Activated naive CD4-positive, alpha-beta T cell treated with anti-CD3 and anti-CD28 coated beads for 36 hours (primary cell): ENCODE measurements at regions of chr17 and their contacts with region 1.

Region 1: GRCh38 chr17:48024937-48025906 is 12.4 kb downstream of the COPZ2 start:
- DNase-seq: peak; percentile 98
- H3K4me3 Mint-ChIP-seq: peak overlapping the region; percentile 81
- H3K27ac Mint-ChIP-seq: no peak overlapping the region
- H3K4me1 Mint-ChIP-seq: peaks cover 23% of the 10 kb centered on the region
- H3K27me3 Mint-ChIP-seq: peaks cover 19% of the 10 kb centered on the region

Region 2: DNA sequence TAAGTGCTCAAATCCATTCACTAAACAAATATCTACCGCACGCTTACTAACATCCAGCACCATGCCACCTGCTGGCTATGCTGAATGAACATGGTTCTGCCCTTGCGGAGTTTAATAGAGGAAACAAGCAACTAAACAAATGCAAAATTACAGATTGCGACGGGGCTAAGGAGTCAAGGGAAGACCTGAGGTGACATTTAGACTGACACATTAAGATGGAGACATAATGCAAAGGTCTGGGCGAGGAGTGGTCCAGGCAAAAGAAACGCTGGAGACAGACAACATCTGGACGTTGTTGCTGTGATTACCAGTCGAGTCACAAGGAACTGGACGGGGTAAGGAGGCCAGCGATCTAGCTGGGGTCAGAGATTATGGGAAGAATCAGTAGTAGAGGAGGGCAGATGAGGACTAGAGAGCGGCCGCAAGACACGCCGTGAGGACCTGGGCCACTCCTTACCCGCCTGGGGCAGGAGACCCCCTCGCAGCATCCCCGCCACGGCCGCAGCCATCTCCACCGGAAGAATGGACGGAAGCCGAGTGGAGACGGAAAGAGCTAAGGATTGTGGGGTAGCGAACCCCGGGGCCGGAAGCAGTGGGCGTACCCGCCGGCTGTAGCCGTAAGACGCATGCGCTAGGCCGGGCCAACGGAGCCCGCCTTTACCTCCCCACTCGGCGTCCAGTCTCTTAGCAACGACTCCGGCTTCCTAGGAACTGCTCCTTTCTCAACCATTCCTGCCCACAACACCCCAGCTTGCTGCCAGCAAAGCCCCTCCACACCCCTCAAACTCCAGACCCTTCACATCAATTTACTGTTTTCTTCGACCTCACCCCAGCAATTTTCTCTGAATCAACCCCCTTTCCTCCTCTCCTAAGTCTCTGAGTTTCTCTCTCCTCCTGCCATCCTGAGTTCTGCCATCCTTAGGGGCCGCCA is 194.0 kb before region 1 on chr17 and contains the starts of genes LRRC46 and MRPL10:
- CTCF ChIA-PET with region 1: no interaction called
- intact Hi-C with region 1: no loop called
- DNase-seq: peak; percentile 93
- H3K4me3 Mint-ChIP-seq: peak within 1 kb of the TSS; percentile 89
- H3K27ac Mint-ChIP-seq: peak within 1 kb of the TSS; percentile 78
- H3K4me1 Mint-ChIP-seq: peaks cover 60% of the 10 kb centered on the region
- H3K27me3 Mint-ChIP-seq: no peaks in the 10 kb centered on the region
- total RNA-seq, gene LRRC46: 0.31 to 0.52 TPM
- total RNA-seq, gene MRPL10: 66.7 to 70.0 TPM

Region 3: DNA sequence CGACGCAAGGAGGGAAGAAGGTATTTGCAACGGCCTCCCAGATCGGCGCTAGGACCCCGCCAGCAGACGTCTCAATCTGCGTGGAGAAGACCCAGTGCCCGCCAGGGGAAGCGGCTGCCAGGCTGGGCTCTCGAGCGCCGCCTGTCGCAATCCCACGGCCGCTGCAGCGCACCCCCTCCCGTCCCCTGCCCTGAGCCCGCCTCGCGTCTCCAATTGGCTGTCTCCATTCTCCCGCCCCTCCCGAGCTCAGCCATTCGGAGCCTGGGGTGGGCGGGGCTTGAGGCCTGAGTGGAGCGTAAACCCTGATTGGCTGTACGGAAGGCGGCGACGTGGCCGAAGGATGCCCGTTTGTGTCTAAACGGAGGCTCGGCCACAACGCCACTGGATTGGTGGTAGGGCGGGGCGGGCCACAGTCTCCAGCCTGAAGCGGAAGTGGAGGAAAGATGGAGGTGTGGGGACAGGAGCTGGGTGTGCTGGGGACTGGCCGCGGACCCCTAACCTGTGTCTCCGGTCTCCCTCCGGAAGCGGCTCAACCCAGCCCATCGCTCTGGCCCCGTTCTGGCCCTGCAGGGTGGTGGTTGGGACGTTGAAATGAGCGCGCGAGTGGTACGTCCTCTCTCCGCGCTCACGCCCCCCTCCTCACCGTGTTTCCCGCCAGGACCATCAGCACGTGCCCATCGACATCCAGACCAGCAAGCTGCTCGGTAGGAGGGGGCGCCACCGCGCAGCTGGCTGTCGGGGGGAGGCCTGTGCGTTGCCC is 54.3 kb before region 1 on chr17 and contains the start of gene CDK5RAP3:
- CTCF ChIA-PET with region 1: interaction called, 3 read pairs
- intact Hi-C with region 1: loop called (anchors 2 kb)
- DNase-seq: peak; percentile 100
- H3K4me3 Mint-ChIP-seq: peak within 1 kb of the TSS; percentile 95
- H3K27ac Mint-ChIP-seq: peak within 1 kb of the TSS; percentile 80
- H3K4me1 Mint-ChIP-seq: peaks cover 24% of the 10 kb centered on the region
- H3K27me3 Mint-ChIP-seq: no peaks in the 10 kb centered on the region
- total RNA-seq, gene CDK5RAP3: 174 to 175 TPM

Region 4: GRCh38 chr17:48002266-48002915 is 22.8 kb before region 1 on chr17:
- CTCF ChIA-PET with region 1: interaction called, 12 read pairs
- intact Hi-C with region 1: no loop called
- DNase-seq: no peak
- H3K4me3 Mint-ChIP-seq: no peak overlapping the region
- H3K27ac Mint-ChIP-seq: no peak overlapping the region
- H3K4me1 Mint-ChIP-seq: peaks cover 4% of the 10 kb centered on the region
- H3K27me3 Mint-ChIP-seq: peaks cover 7% of the 10 kb centered on the region

Region 5: DNA sequence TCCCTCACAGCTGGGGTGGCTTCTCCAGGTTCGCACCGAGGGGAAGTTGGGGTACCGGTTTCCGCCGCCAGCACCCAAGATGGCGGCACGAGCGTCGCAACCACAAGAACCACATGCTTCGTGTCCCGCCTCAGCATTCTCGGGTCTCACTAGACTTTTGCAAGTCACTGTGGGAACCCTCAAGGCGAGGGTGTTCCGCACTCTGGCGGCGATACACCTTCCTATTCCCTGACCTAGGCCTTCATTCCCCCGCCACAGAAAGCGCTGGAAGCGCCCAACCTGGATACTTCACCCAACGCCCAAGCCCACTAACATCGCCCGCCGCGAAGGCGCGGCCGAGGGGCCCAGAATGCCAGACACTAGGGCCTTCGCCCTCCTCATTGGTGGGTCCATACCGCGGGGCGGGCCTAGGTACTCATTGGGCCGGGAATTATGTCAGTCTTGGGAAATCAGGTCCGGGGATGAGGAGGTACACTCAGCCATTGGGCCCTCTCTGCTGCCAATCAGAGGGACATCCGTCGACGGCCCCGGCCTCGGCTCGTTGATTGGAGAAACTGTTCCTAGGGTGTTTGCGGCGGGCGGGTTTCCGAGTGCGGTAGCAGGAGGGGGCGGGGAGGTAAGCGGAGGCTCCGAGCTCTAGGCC is 22.6 kb after region 1 on chr17 and contains the start of gene NFE2L1:
- CTCF ChIA-PET with region 1: interaction called, 25 read pairs
- intact Hi-C with region 1: loop called (anchors 1 kb)
- DNase-seq: peak; percentile 100
- H3K4me3 Mint-ChIP-seq: peak within 1 kb of the TSS; percentile 99
- H3K27ac Mint-ChIP-seq: peak within 1 kb of the TSS; percentile 98
- H3K4me1 Mint-ChIP-seq: peaks cover 51% of the 10 kb centered on the region
- H3K27me3 Mint-ChIP-seq: no peaks in the 10 kb centered on the region
- total RNA-seq, gene NFE2L1: 95.2 to 102 TPM

Region 6: DNA sequence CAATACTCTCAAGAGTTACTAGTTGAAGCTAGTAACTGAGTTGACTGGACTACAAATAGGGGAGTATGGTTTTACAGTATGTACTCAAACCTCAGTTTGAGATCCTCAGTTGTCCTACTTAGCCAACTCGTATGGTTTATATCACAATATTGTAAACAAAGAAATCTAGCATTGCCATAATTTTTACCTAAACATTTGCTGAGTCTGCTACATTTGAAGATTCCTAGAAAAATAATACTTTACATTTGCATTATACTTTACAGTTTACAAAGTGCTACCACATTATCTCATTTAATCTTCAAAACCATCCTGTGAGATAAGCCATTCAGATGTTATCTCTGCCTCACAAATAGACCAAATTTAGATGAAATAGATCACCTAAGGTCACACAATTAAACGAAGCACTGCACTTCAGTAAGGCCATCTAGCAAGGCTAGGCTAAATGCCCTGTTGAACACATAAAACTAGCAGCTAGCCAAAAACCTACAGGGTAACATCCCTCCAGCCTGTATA is 59.8 kb after region 1 on chr17:
- CTCF ChIA-PET with region 1: interaction called, 29 read pairs
- intact Hi-C with region 1: no loop called
- DNase-seq: no peak
- H3K4me3 Mint-ChIP-seq: no peak overlapping the region
- H3K27ac Mint-ChIP-seq: no peak overlapping the region
- H3K4me1 Mint-ChIP-seq: peaks cover 4% of the 10 kb centered on the region
- H3K27me3 Mint-ChIP-seq: no peaks in the 10 kb centered on the region

Region 7: GRCh38 chr17:48131216-48131824 is 106.1 kb after region 1 on chr17:
- CTCF ChIA-PET with region 1: interaction called, 34 read pairs
- intact Hi-C with region 1: loop called (anchors 1 kb)
- DNase-seq: peak; percentile 75
- H3K4me3 Mint-ChIP-seq: no peak overlapping the region
- H3K27ac Mint-ChIP-seq: no peak overlapping the region
- H3K4me1 Mint-ChIP-seq: no peaks in the 10 kb centered on the region
- H3K27me3 Mint-ChIP-seq: no peaks in the 10 kb centered on the region

Region 8: DNA sequence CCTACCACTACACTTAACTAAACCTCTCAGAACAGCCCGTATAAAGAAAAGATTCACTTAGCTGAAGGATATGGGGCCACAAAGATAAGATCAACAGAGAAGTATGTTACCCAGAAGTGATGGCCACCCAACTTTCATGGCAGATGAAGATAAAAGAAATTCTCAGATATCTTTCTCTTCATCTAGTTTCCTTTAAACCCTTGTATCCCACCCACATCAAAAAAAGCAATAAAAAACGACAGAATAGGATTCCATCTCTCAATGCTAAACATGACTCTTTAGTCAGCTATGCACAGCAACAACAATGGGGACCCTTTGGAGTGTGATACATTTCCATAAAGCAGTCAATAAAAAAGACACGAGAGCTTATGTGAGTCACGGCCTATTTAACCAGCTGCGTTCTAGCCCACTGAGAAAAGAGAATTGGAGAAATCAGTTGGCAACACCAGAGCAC is 168.9 kb after region 1 on chr17:
- CTCF ChIA-PET with region 1: no interaction called
- intact Hi-C with region 1: no loop called
- DNase-seq: no peak
- H3K4me3 Mint-ChIP-seq: no peak overlapping the region
- H3K27ac Mint-ChIP-seq: no peak overlapping the region
- H3K4me1 Mint-ChIP-seq: peaks cover 39% of the 10 kb centered on the region
- H3K27me3 Mint-ChIP-seq: no peaks in the 10 kb centered on the region

Region 9: DNA sequence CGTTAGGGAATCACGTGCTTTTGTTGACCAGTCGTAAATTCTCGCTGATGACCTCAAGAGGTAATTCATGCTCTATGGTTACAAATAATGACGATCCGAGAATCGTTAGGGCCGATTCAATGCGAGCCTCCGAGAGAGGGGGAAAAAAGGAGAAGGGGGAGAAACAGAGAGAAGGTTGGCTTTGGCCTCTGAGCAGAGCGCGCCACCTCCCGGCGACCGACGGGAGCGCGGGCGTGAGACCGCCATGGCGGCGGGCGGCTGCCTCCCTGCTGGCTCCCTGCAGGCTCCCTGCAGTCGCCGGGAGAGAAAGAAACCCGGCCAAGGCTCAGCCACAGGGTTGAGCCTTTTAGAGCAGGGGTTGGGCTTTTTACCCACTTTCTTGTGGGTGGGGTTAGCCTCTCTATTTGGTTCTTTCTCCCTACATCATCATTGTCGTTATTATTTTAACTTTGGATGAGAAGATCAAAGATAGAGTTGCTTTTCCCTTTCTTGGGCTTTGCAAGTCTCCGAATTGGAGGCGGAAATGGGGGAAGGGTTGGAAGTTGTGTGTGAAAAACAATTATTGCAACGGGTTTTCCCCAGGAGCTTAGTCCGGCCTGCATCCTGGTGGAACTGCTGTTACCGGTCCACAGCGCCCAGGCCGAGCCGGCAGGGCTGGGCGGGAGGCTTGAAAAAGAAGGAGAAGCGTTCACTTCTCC is 568.8 kb after region 1 on chr17:
- CTCF ChIA-PET with region 1: interaction called, 7 read pairs
- intact Hi-C with region 1: loop called (anchors 2 kb)
- DNase-seq: peak; percentile 87
- H3K4me3 Mint-ChIP-seq: peak overlapping the region; percentile 77
- H3K27ac Mint-ChIP-seq: no peak overlapping the region
- H3K4me1 Mint-ChIP-seq: peaks cover 36% of the 10 kb centered on the region
- H3K27me3 Mint-ChIP-seq: peaks cover 90% of the 10 kb centered on the region

Region 10: DNA sequence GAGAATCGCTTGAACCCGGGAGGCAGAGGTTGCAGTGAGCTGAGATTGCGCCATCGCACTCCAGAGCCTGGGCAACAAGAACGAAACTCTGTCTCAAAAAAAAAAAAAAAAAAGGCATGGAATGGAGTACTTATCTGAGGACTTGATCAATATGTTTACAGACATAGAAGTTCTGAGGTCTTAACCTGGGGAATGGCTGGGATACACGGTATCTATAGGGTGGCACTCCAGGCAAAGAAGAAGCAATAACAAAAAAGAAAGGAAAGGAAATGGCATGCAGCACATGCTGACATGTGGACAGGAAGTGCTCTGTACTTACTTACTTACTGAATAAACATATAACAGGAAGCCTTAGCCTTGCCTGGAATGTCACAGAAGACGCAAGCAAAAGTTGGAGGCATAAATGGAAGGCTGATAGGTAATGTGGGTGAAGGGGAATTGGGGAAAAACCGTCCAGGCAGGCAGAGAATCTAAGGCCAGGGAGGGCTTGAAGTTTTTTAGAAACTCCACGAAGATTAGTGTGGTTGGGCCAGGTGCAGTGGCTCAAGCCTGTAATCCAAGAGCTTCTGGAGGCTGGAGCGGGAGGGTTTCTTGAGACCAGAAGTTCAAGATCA is 1662.8 kb after region 1 on chr17:
- CTCF ChIA-PET with region 1: no interaction called
- intact Hi-C with region 1: no loop called
- DNase-seq: peak; percentile 53
- H3K4me3 Mint-ChIP-seq: peak overlapping the region; percentile 36
- H3K27ac Mint-ChIP-seq: peak overlapping the region; percentile 90
- H3K4me1 Mint-ChIP-seq: peaks cover 47% of the 10 kb centered on the region
- H3K27me3 Mint-ChIP-seq: no peaks in the 10 kb centered on the region